ENCODE measurements at regions of chr17 and their contacts with region 1.

Region 1: GRCh38 chr17:75818326-75818885 is 25.8 kb downstream of the UNC13D start:
- DNase-seq: no peak

Region 2: DNA sequence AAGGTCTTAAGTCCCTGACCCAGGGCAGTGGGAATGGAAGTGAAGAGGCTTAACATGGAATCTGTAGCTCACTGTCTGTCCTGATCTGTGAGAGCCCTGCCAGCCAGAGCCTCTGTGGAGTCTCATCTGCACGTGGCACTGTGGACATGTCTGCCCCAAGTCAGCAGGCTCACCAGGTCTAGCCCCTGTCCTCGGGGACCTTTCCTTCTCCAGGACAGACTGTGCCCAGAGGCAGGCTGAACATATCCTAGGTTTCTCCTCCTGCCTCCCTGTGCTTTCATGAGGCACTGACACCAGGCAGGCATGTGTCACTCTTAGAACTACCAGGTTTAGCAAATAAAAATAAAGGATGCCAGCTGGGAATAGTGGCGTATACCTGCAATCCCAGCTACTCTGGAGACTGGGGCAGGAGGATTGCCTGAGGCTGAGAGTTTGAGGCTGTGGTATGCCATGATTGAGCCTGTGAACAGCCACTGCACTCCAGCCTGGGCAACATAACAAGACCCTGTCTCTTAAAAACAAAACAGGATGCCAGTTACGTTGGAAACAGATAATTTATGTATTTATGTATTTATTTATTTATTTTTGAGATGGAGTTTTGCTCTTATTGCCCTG is 11.4 kb before region 1 on chr17:
- intact Hi-C with region 1: loop called in 1 of 2 experiments (anchors 1 kb)
- DNase-seq: peak; percentile 57